A549 (cell line): ENCODE measurements at regions of chr3 and their contacts with region 1.

Region 1: GRCh38 chr3:48273594-48274211 is 32.8 kb downstream of the ZNF589 start:
- DNase-seq: peak; percentile 54 to 58
- ATAC-seq: peak; percentile 87 to 91
- H3K4me3 ChIP-seq: no peak overlapping the region
- H3K27ac ChIP-seq: no peak overlapping the region
- H3K4me1 ChIP-seq: no peaks in the 10 kb centered on the region
- CTCF ChIP-seq: peak; percentile 78
- EP300 ChIP-seq: no peak
- POLR2A ChIP-seq: no peak
- RAD21 ChIP-seq: peak; percentile 80 to 88

Region 2: GRCh38 chr3:48256557-48256956 is 17.1 kb before region 1 on chr3:
- CTCF ChIA-PET with region 1: interaction called, 10 read pairs
- POLR2A ChIA-PET with region 1: no interaction called
- DNase-seq: no peak
- ATAC-seq: no peak
- H3K4me3 ChIP-seq: no peak overlapping the region
- H3K27ac ChIP-seq: no peak overlapping the region
- H3K4me1 ChIP-seq: no peaks in the 10 kb centered on the region
- CTCF ChIP-seq: no peak
- EP300 ChIP-seq: no peak
- POLR2A ChIP-seq: no peak
- RAD21 ChIP-seq: no peak

Region 3: DNA sequence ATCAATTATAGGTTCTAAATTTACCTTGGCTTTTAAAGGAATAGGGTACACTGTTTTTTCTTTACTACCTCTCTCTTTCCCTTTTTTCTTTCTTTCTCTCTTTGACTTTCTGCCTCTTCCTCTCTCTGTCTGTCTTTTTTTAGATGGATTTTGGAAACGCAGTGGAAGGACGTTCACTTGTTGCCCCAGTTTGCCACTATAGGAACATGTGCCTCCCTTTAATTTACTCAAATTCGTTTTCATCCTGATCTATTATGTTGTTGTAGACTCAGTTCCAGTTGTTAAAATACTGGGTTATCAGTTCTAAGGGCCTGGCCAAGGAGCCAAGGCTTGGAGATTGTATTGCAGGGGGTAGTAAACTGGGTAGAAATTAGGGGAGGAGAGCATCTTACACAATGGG is 60.9 kb after region 1 on chr3:
- CTCF ChIA-PET with region 1: no interaction called
- POLR2A ChIA-PET with region 1: no interaction called
- DNase-seq: no peak
- ATAC-seq: no peak
- H3K4me3 ChIP-seq: no peak overlapping the region
- H3K27ac ChIP-seq: no peak overlapping the region
- H3K4me1 ChIP-seq: no peaks in the 10 kb centered on the region
- CTCF ChIP-seq: no peak
- EP300 ChIP-seq: no peak
- POLR2A ChIP-seq: no peak
- RAD21 ChIP-seq: no peak